ACHN (cell line): ENCODE measurements at regions of chr9 and their contacts with region 1.

Region 1: DNA sequence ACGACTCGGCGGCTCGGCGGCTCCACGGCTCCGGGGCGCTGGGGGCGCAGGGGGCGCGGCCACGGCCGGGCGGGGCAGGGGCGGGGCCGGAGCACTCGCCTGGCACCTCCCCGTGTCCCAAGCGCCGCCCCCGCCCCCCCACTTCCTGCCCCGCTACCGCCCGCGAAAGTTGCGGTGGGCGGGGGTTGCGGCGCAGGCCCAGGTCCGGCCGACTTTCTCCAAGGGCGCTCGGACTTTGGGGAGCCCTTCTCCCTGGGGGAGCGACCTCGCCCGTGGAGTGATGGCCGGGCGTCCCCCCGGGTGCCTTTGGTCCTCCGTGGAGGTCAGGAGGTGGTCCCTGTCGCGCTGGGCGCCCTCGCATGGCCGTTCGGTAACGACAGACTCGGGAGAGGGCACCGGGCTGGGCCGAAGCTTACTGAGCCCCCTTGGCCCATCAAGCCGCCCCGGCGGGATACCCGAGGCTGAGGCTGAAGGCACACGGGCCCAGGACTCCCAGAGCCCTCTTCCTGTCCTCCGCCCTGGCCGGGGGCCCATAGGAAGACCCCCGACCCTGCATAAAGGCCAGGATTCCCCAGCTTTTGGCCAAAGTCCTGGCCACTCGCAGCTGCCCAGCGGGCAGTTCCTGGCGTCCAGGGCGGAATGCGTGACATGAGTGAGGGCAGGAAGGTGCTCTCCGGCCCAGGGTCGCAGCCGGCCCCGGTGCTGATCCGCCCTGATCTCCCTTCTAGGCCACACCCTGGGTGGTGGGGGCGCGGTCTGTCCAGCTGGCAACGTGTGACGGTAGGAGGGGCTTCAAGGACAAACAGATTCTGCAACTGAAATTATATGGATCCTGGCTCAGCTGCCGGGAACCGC is 883 bp upstream of the VAV2 start:
- DNase-seq: peak; percentile 80

Region 2: DNA sequence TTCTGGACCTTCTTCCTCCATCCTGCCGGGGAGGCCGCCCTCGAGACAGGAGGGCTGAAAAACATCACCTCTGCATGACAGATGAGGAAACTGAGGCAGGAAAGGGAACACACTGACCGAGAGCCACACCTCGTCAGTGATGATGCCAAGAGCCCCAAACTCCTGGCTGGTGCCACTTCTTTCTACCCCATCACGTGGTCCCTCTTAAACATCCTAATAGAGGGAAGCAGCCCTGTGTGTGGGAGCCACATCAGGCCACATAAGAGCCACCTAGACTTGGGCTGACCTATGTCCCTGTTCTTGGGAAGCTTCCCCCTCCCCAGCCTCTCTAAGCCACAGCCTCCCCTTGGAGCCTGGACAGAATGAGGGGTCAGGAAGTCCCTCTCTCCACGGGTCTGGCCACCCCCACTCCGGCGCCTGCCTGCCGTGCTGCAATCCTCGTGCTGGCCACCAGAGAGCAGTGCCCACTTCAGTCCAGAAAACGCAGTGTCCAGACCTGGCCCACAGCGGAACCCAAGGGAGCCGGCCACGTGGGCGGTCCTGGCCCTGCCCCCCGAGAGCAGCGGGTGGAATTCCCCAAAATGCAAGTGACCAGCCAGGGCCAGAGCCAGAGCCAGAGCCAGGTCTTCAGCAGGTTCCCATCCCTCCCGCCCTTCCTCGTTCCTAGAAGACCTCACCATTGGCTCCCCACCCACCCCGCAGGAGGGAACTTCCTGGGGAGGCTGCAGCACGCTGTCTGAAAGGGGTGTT is 200.1 kb before region 1 on chr9:
- in situ Hi-C with region 1: loop called (anchors 25 kb)
- DNase-seq: peak; percentile 63